Heart left ventricle (tissue), 16 donors: ENCODE measurements at regions of chr6 and their contacts with region 1.

Region 1: GRCh38 chr6:46098678-46099077 is 31.1 kb upstream of the ENPP4 start:
- DNase-seq: peak in 3 of 5 donors; percentile 15 to 62 (median 39)
- ATAC-seq: peak; percentile 26 to 54 (median 48)
- H3K4me3 ChIP-seq: no peak overlapping the region
- H3K27ac ChIP-seq: no peak overlapping the region
- H3K4me1 ChIP-seq: peaks cover 0 to 8% (median 0%) of the 10 kb centered on the region in 12 donors
- H3K27me3 ChIP-seq: no peaks in the 10 kb centered on the region
- CTCF ChIP-seq: no peak
- POLR2A ChIP-seq: no peak

Region 2: GRCh38 chr6:46203391-46204177 is 104.9 kb after region 1 on chr6:
- intact Hi-C with region 1: loop called in 6 of 10 experiments (anchors 5 to 10 kb)
- DNase-seq: no peak
- ATAC-seq: no peak
- H3K4me3 ChIP-seq: no peak overlapping the region
- H3K27ac ChIP-seq: no peak overlapping the region
- H3K4me1 ChIP-seq: no peaks in the 10 kb centered on the region
- H3K27me3 ChIP-seq: no peaks in the 10 kb centered on the region
- CTCF ChIP-seq: no peak
- POLR2A ChIP-seq: no peak